ENCODE measurements at regions of chr20 and their contacts with region 1.

Region 1: GRCh38 chr20:31723319-31724078 is 831 bp upstream of the BCL2L1 start:
- DNase-seq: peak; percentile 96 to 99
- H3K4me3 ChIP-seq: peak overlapping the region; percentile 48 to 94 (median 70)
- H3K27ac ChIP-seq: peak overlapping the region; percentile 95
- H3K4me1 ChIP-seq: peaks cover 15 to 37% (median 33%) of the 10 kb centered on the region in 4 experiments
- H3K27me3 ChIP-seq: no peaks in the 10 kb centered on the region
- CTCF ChIP-seq: peak; percentile 97 to 99 (median 98)
- EP300 ChIP-seq: no peak
- POLR2A ChIP-seq: peak in 1 of 2 experiments; percentile 89; a peak in 2 of 3 replicates
- RAD21 ChIP-seq: peak; percentile 98 to 99

Region 2: DNA sequence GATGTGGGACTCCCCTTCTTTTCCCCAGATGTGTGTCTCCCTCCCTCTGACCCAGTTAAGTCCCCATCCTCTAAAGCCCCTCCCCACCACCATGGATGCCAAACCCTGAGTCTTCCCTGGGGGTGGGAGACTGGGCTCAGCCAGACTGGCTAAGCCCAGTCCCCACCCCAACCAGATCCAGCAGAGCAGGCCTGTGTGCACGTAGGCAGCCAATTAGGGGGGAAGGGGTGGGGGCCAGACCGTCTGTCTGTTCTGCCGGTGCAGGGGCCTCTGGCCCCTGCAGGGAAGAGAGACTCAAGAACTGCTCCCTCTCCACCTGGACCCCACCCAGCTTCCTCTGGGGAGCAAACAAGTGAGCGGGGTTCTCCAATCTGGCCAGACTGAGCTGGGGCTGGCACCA is 85.2 kb before region 1 on chr20:
- CTCF ChIA-PET with region 1: interaction called, 95 read pairs
- POLR2A ChIA-PET with region 1: interaction called, 7 read pairs
- DNase-seq: no peak
- H3K4me3 ChIP-seq: no peak overlapping the region
- H3K27ac ChIP-seq: no peak overlapping the region
- H3K4me1 ChIP-seq: peaks cover 0 to 2% (median 0%) of the 10 kb centered on the region in 4 experiments; a peak in 2 of 7 replicates
- H3K27me3 ChIP-seq: no peaks in the 10 kb centered on the region
- CTCF ChIP-seq: no peak
- EP300 ChIP-seq: no peak
- POLR2A ChIP-seq: no peak
- RAD21 ChIP-seq: no peak

Region 3: DNA sequence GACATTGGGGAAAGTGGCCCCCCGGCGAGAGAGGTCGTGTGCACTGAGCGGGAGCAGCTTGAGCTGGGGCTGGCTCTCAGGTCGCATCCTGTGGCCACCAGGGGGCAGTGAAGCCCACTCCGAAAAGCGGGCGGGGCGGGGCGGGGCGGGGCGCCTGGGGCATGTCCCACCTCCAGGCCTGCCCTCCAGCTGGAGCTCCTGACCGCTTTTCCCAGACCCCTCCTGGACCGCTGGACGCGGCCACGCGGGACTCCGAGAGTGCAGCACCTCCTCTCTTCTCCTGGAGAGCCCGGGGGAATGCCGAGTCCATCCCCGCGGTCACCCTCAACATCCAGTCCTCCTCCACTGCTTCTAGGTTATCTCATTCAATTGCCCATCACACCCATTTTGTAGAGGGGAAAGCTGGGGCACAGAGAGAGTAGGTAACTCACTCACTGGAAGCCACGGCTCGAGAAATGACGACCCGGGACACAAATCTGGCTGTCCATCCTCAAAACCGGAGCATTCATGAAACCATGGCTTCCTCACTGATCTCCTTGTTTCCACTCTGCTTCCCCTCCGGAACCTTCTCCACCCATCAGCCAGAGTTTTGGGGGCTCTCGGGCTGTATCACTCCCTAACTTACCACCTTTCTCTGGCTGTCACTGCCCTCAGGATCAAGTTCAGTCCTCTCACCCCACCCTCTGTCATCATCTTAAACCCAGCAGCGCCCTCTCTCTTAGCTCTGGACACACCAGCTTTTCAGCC is 61.7 kb before region 1 on chr20:
- CTCF ChIA-PET with region 1: interaction called, 151 read pairs
- POLR2A ChIA-PET with region 1: interaction called, 108 read pairs
- DNase-seq: peak; percentile 23 to 88
- H3K4me3 ChIP-seq: peak overlapping the region; percentile 11 to 62 (median 48); a peak in 7 of 8 replicates
- H3K27ac ChIP-seq: no peak overlapping the region
- H3K4me1 ChIP-seq: peaks cover 0 to 7% (median 5%) of the 10 kb centered on the region in 4 experiments; a peak in 5 of 7 replicates
- H3K27me3 ChIP-seq: no peaks in the 10 kb centered on the region
- CTCF ChIP-seq: peak; percentile 79 to 92 (median 86)
- EP300 ChIP-seq: no peak
- POLR2A ChIP-seq: peak in 1 of 2 experiments; percentile 58; a peak in 2 of 3 replicates
- RAD21 ChIP-seq: peak; percentile 67 to 79

Region 4: DNA sequence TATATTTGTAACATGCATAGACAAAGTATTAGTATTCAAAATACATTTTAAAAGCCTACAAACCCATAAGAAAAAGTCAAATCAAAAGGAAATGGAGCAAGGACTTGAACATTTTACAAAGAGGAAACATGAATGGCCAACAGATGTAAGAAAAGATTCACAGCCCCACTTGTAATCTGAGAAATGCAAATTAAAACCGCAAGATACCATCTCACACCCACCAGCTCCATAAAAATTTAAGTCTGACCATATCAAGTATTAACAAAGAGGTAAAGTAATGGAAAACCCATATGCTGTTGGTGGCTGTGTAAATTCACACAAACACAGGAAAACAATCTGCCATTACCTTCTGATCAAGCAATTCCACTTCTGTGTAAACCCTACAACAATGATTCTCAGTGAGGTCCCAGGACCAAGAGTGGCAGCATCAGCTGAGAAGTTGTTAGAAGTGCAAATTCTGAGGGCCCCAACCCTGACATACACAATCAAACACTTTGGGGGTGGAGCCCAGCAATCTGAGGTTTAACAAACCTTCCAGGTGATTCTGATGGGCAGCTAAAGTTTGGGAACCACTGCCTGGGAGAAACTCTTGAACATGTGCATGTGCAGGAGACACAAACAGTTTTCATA is 31.7 kb before region 1 on chr20:
- CTCF ChIA-PET with region 1: interaction called, 42 read pairs
- POLR2A ChIA-PET with region 1: interaction called, 10 read pairs
- DNase-seq: no peak
- H3K4me3 ChIP-seq: peak overlapping the region in 1 of 4 experiments; percentile 1; a peak in 1 of 8 replicates
- H3K27ac ChIP-seq: no peak overlapping the region
- H3K4me1 ChIP-seq: peaks cover 14 to 26% (median 20%) of the 10 kb centered on the region in 4 experiments
- H3K27me3 ChIP-seq: no peaks in the 10 kb centered on the region
- CTCF ChIP-seq: no peak
- EP300 ChIP-seq: no peak
- POLR2A ChIP-seq: no peak
- RAD21 ChIP-seq: no peak

Region 5: GRCh38 chr20:31712564-31713311 is 10.8 kb before region 1 on chr20:
- CTCF ChIA-PET with region 1: interaction called, 27 read pairs
- POLR2A ChIA-PET with region 1: interaction called, 85 read pairs
- DNase-seq: peak; percentile 55 to 86
- H3K4me3 ChIP-seq: peak overlapping the region in 3 of 4 experiments; percentile 17 to 43 (median 30); a peak in 4 of 8 replicates
- H3K27ac ChIP-seq: peak overlapping the region; percentile 31
- H3K4me1 ChIP-seq: peaks cover 27 to 44% (median 36%) of the 10 kb centered on the region in 4 experiments
- H3K27me3 ChIP-seq: no peaks in the 10 kb centered on the region
- CTCF ChIP-seq: no peak
- EP300 ChIP-seq: peak in 1 of 2 experiments; percentile 87; a peak in 1 of 3 replicates
- POLR2A ChIP-seq: no peak; a peak in 1 of 3 replicates
- RAD21 ChIP-seq: no peak; a peak in 1 of 4 replicates